ENCODE measurements at regions of chr18 and their contacts with region 1.

Region 1: DNA sequence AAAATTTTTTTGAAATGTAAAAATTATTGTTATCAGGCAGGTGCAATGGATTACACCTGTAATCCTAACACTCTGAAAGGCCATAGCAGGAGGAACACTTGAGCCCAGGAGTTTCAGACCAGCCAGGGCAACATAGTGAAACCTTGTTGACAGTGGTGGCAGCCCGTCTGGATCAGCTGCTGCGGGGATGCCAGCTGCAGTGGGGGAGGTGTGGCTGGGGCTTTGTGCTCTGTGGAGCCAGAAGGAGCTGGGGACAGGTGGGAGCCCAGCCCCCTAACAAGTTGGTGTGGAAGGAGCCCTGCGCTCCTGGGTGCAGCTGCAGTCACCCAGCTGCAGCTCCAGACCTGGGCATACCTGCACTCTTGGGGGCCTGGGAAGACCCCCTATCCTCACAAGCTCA is 182.4 kb upstream of the MC4R start:
- DNase-seq: no peak
- ATAC-seq: no peak
- H3K4me3 ChIP-seq: no peak overlapping the region
- H3K27ac ChIP-seq: no peak overlapping the region
- H3K4me1 ChIP-seq: no peaks in the 10 kb centered on the region
- H3K27me3 ChIP-seq: peaks cover 0 to 8% (median 0%) of the 10 kb centered on the region in 7 donors
- CTCF ChIP-seq: no peak

Region 2: GRCh38 chr18:59837586-59837985 is 717.4 kb before region 1 on chr18:
- intact Hi-C with region 1: loop called in 2 of 10 experiments (anchors 5 to 10 kb)
- DNase-seq: peak in 1 of 2 donors; percentile 21
- ATAC-seq: peak in 4 of 8 donors; percentile 11 to 51 (median 44)
- H3K4me3 ChIP-seq: no peak overlapping the region
- H3K27ac ChIP-seq: no peak overlapping the region
- H3K4me1 ChIP-seq: peaks cover 0 to 4% (median 0%) of the 10 kb centered on the region in 9 donors
- H3K27me3 ChIP-seq: peaks cover 0 to 38% (median 0%) of the 10 kb centered on the region in 7 donors
- CTCF ChIP-seq: peak; percentile 73 to 87 (median 84)

Region 3: GRCh38 chr18:59988098-59988706 is 566.8 kb before region 1 on chr18:
- intact Hi-C with region 1: loop called in 3 of 10 experiments (anchors 5 kb)
- DNase-seq: no peak
- ATAC-seq: no peak
- H3K4me3 ChIP-seq: no peak overlapping the region
- H3K27ac ChIP-seq: no peak overlapping the region
- H3K4me1 ChIP-seq: no peaks in the 10 kb centered on the region
- H3K27me3 ChIP-seq: peaks cover 0 to 32% (median 20%) of the 10 kb centered on the region in 7 donors
- CTCF ChIP-seq: peak; percentile 63 to 95 (median 88)

Region 4: DNA sequence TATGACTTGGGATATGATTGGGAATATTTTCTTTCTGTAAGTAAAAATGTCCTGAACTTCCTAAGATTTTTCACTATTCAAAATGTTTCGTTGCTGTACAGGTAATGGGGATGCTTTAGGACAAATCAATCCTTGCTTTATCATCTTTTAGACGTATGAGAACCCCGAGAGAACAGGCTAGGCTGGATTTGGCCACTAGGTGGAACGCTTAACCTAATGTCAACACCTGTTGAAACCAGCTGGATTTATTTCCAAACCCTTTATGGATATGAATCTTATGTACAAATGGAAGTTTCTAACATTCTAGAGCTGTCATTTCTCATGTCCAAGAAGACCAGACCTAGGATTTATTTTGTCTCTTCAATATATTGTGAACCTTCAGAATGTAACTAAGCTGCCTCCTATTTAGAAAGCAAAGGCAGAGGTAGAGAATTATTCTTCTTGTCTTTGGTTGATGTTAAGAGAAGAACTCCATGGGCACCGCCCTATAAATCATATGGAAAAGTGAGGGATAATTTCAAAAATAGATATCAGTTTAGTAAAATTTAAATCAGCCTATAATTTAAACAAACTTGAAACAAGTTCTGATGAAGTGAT is 558.5 kb before region 1 on chr18:
- intact Hi-C with region 1: loop called in 1 of 10 experiments (anchors 5 kb)
- DNase-seq: no peak
- ATAC-seq: no peak
- H3K4me3 ChIP-seq: no peak overlapping the region
- H3K27ac ChIP-seq: no peak overlapping the region
- H3K4me1 ChIP-seq: no peaks in the 10 kb centered on the region
- H3K27me3 ChIP-seq: peaks cover 0 to 48% (median 14%) of the 10 kb centered on the region in 7 donors
- CTCF ChIP-seq: peak in 7 of 9 donors; percentile 22 to 45 (median 37)